ENCODE measurements at regions of chr11 and their contacts with region 1.

Region 1: GRCh38 chr11:102666331-102666957 is 39.1 kb downstream of the MMP27 start:
- DNase-seq: no peak
- ATAC-seq: peak; percentile 74
- H3K4me3 Mint-ChIP-seq: no peak overlapping the region
- H3K27ac Mint-ChIP-seq: no peak overlapping the region
- H3K4me1 Mint-ChIP-seq: peaks cover 14% of the 10 kb centered on the region
- H3K27me3 Mint-ChIP-seq: no peaks in the 10 kb centered on the region
- CTCF ChIP-seq: peak; percentile 54

Region 2: DNA sequence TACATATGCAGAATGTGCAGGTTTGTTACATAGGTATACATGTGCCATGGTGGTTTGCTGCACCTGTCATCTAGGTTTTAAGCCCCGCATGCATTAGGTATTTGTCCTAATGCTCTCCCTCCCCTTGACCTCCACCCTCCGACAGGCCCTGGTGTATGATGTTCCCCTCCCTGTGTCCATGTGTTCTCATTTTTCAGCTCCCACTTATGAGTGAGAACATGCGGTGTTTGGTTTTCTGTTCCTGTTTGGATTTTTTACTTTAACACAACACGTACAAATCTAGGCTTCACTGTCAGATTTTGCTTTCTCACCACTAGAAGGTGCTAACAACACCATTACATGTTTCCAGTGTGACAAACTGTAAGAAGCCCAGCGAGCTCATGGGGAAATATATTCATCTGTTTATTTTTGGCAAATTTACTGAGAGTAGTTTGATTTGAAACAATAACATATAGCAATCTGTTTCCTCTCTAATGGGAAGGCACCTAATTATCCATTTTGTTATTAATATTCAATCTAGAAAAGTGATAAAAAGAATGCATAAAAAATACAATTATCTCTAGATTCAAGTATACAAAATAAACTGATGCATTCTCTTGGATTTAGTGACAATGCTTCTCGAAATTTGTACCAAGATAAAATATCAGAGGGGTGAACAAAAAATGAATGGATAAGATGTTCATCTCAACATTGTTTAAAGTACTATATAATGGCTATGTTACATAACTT is 372.4 kb before region 1 on chr11:
- CTCF ChIA-PET with region 1: interaction called, 12 read pairs
- POLR2A ChIA-PET with region 1: no interaction called
- DNase-seq: no peak
- ATAC-seq: peak; percentile 72
- H3K4me3 Mint-ChIP-seq: no peak overlapping the region
- H3K27ac Mint-ChIP-seq: no peak overlapping the region
- H3K4me1 Mint-ChIP-seq: peaks cover 12% of the 10 kb centered on the region
- H3K27me3 Mint-ChIP-seq: no peaks in the 10 kb centered on the region; the same call in 1 of the 2 replicates
- CTCF ChIP-seq: 0 out of 2 replicates have a peak, but pooled peaks have one; percentile 35

Region 3: GRCh38 chr11:102390667-102391465 is 275.6 kb before region 1 on chr11:
- CTCF ChIA-PET with region 1: interaction called, 23 read pairs
- POLR2A ChIA-PET with region 1: no interaction called
- DNase-seq: peak; percentile 77
- ATAC-seq: peak; percentile 99
- H3K4me3 Mint-ChIP-seq: no peak overlapping the region
- H3K27ac Mint-ChIP-seq: no peak overlapping the region
- H3K4me1 Mint-ChIP-seq: peaks cover 2% of the 10 kb centered on the region; the same call in 1 of the 2 replicates
- H3K27me3 Mint-ChIP-seq: no peaks in the 10 kb centered on the region
- CTCF ChIP-seq: peak; percentile 86

Region 4: DNA sequence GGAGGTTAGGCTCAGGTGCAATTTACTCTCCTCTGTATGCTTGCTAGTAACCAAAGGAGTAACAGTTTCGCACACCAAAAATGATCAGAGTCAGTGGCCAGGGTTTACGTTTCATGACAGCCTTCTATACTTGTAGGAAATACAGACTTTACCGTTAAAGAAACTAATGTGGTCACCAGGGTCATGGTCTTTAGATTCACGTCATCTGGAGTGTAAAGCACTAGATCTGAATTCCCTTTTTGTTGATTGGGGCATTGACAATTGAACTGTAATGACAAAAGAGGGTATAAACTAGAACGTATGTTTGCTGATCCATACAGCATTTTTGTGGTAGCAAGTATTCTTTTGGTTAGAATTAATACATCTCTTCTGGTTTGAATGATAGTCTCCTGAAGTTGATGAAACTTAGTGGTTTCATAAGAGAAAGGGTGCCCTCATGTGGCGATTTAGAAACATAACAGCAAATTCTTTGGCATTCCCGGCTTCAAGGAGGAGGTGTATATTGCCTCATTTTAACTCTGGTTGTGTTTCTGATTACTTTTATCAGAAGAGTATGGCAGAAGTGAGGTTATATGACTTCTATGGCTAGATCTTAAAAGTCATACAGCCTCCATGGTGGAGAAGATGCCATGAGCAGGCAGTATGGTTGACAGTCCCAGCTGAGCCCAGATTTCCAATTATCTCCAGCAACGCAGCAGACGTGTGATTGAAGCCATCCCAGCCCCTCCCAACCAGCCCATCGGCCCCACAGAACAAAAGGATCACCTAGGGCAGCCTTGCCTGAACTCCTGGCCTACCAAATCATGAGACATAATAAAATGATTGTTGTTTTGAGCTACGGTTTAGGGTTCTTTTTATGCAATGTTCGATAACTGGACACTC is 171.0 kb before region 1 on chr11:
- CTCF ChIA-PET with region 1: interaction called, 12 read pairs
- POLR2A ChIA-PET with region 1: no interaction called
- DNase-seq: peak; percentile 44
- ATAC-seq: peak; percentile 94
- H3K4me3 Mint-ChIP-seq: peak overlapping the region; percentile 33; the same call in 1 of the 2 replicates
- H3K27ac Mint-ChIP-seq: peak overlapping the region; percentile 65; the same call in 1 of the 2 replicates
- H3K4me1 Mint-ChIP-seq: peaks cover 6% of the 10 kb centered on the region
- H3K27me3 Mint-ChIP-seq: no peaks in the 10 kb centered on the region
- CTCF ChIP-seq: peak; percentile 48

Region 5: GRCh38 chr11:102592634-102593581 is 73.5 kb before region 1 on chr11:
- CTCF ChIA-PET with region 1: interaction called, 13 read pairs
- POLR2A ChIA-PET with region 1: no interaction called
- DNase-seq: no peak
- ATAC-seq: peak; percentile 94
- H3K4me3 Mint-ChIP-seq: no peak overlapping the region
- H3K27ac Mint-ChIP-seq: no peak overlapping the region
- H3K4me1 Mint-ChIP-seq: peaks cover 8% of the 10 kb centered on the region
- H3K27me3 Mint-ChIP-seq: no peaks in the 10 kb centered on the region
- CTCF ChIP-seq: peak; percentile 32; the same call in 1 of the 2 replicates

Region 6: GRCh38 chr11:102680945-102681344 is 14.5 kb after region 1 on chr11:
- CTCF ChIA-PET with region 1: interaction called, 30 read pairs
- POLR2A ChIA-PET with region 1: no interaction called
- DNase-seq: no peak
- ATAC-seq: no peak
- H3K4me3 Mint-ChIP-seq: no peak overlapping the region
- H3K27ac Mint-ChIP-seq: no peak overlapping the region
- H3K4me1 Mint-ChIP-seq: peaks cover 44% of the 10 kb centered on the region
- H3K27me3 Mint-ChIP-seq: peaks cover 4% of the 10 kb centered on the region
- CTCF ChIP-seq: no peak